ENCODE measurements at regions of chr1 and their contacts with region 1.

Region 1: DNA sequence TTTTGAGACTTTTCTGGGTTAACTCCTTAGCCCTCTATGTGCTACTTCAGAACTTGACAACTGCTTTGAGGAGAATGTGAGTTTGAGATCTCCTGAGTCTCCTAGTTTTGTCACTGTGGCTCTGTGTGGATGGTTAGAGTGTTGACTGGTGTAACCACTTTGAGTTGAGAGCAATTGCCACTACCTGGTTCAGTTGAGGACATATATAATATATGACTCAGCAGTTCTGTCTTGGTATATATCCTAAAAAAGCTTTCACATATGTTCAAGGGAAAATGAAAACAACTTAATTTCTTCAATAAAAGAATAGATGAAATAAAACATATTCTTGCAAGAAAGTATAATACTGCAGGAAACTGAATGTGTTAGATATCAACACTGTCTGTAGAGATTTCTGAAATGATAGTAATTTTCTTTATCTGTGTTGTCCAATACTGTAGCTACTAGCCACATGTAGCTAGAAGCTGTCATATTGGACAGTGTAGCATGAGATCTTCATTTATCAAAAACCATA is 96.7 kb upstream of the QSOX1 start:
- DNase-seq: no peak
- H3K4me3 ChIP-seq: no peak overlapping the region
- H3K27ac ChIP-seq: no peak overlapping the region
- H3K4me1 ChIP-seq: no peaks in the 10 kb centered on the region
- H3K27me3 ChIP-seq: no peaks in the 10 kb centered on the region
- CTCF ChIP-seq: no peak

Region 2: DNA sequence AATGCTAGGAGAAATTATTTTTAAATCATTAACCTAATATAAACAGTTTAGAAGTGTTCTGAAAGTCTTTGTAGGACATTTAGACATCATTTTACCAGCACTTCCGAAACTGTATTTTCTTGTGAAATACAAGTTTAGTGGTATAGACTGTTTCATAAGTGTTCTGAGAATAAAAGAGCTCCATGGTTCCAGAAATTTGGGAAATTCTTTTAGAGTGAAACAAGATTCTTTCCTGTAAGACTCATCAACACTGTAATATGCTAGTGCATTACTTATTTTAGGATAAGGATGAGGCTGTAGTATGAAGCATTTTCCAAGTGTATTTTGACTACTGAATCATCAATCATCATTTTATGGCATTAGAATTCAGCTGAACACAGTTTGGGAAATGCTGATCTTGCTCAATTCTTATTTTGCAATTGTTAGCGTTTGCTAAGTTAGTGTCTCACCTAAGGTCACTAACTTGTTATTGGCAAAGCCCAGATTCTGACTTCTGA is 29.9 kb before region 1 on chr1:
- intact Hi-C with region 1: no loop called
- DNase-seq: no peak
- H3K4me3 ChIP-seq: no peak overlapping the region
- H3K27ac ChIP-seq: no peak overlapping the region
- H3K4me1 ChIP-seq: peaks cover 0 to 5% (median 2%) of the 10 kb centered on the region in 4 donors
- H3K27me3 ChIP-seq: no peaks in the 10 kb centered on the region
- CTCF ChIP-seq: no peak

Region 3: GRCh38 chr1:180101411-180101810 is 43.5 kb after region 1 on chr1:
- intact Hi-C with region 1: loop called (anchors 10 kb)
- DNase-seq: no peak
- H3K4me3 ChIP-seq: no peak overlapping the region
- H3K27ac ChIP-seq: no peak overlapping the region
- H3K4me1 ChIP-seq: no peaks in the 10 kb centered on the region
- H3K27me3 ChIP-seq: no peaks in the 10 kb centered on the region
- CTCF ChIP-seq: no peak

Region 4: DNA sequence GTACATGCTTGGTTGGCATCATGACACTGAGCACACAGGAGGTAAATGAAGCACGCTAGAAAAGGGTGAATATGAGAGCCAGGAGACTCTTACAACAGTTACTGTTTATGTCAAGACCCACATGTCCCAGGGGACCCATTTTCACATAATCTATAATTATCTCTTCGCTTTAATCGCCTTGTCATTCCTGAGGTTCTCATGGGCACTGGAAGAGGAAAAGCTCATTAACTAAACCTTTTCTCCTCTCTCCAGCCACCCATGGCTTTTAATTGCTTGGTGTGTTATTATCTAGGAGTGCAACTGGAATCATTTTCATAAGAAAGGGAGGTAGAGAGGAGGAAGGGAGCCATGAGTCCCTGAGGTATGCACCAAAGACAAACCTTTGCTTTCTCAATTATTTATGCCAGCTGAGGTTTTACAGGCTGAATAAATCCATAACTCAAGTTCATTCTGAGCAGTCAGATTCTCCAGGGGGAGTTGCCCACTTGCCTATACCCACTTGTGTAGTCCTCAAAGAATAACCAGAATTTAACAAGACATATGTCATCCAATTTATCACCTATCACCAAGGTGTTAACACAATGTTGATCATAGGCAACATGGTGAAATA is 367.0 kb after region 1 on chr1:
- intact Hi-C with region 1: no loop called
- DNase-seq: no peak
- H3K4me3 ChIP-seq: no peak overlapping the region
- H3K27ac ChIP-seq: no peak overlapping the region
- H3K4me1 ChIP-seq: no peaks in the 10 kb centered on the region
- H3K27me3 ChIP-seq: no peaks in the 10 kb centered on the region
- CTCF ChIP-seq: no peak